Naive thymus-derived CD4-positive, alpha-beta T cell (primary cell): ENCODE measurements at regions of chr16 and their contacts with region 1.

Region 1: GRCh38 chr16:66977341-66978113 is 10.9 kb upstream of the CES4A start:
- DNase-seq: peak; percentile 69 to 92 (median 82)
- ATAC-seq: peak; percentile 99
- H3K4me3 ChIP-seq: no peak overlapping the region
- H3K4me3 Mint-ChIP-seq: peak overlapping the region in 1 of 10 donors; percentile 12
- H3K27ac ChIP-seq: no peak overlapping the region
- H3K27ac Mint-ChIP-seq: peak overlapping the region in 2 of 9 donors; percentile 42 to 86
- H3K4me1 ChIP-seq: no peaks in the 10 kb centered on the region
- H3K4me1 Mint-ChIP-seq: peaks cover 4 to 69% (median 11%) of the 10 kb centered on the region in 7 donors
- H3K27me3 ChIP-seq: no peaks in the 10 kb centered on the region
- H3K27me3 Mint-ChIP-seq: peaks cover 0 to 3% (median 0%) of the 10 kb centered on the region in 5 donors

Region 2: GRCh38 chr16:66650707-66651473 is 326.6 kb before region 1 on chr16:
- CTCF ChIA-PET with region 1: no interaction called
- POLR2A ChIA-PET with region 1: no interaction called
- intact Hi-C with region 1: no loop called
- DNase-seq: peak; percentile 57 to 87 (median 81)
- ATAC-seq: peak; percentile 99
- H3K4me3 ChIP-seq: peak overlapping the region; percentile 44
- H3K4me3 Mint-ChIP-seq: peak overlapping the region; percentile 50 to 86 (median 76)
- H3K27ac ChIP-seq: no peak overlapping the region
- H3K27ac Mint-ChIP-seq: peak overlapping the region in 6 of 9 donors; percentile 41 to 71 (median 62)
- H3K4me1 ChIP-seq: peaks cover 0 to 5% of the 10 kb centered on the region in 2 donors
- H3K4me1 Mint-ChIP-seq: peaks cover 0 to 15% (median 9%) of the 10 kb centered on the region in 7 donors
- H3K27me3 ChIP-seq: no peaks in the 10 kb centered on the region
- H3K27me3 Mint-ChIP-seq: peaks cover 2 to 11% (median 6%) of the 10 kb centered on the region in 5 donors

Region 3: GRCh38 chr16:66954097-66954659 is 23.3 kb before region 1 on chr16:
- CTCF ChIA-PET with region 1: no interaction called
- POLR2A ChIA-PET with region 1: no interaction called
- intact Hi-C with region 1: loop called in 1 of 2 experiments (anchors 2 kb)
- DNase-seq: peak; percentile 46 to 78 (median 67)
- ATAC-seq: peak; percentile 86
- H3K4me3 ChIP-seq: no peak overlapping the region
- H3K4me3 Mint-ChIP-seq: peak overlapping the region in 1 of 10 donors; percentile 5
- H3K27ac ChIP-seq: no peak overlapping the region
- H3K27ac Mint-ChIP-seq: peak overlapping the region in 1 of 9 donors; percentile 4
- H3K4me1 ChIP-seq: no peaks in the 10 kb centered on the region
- H3K4me1 Mint-ChIP-seq: peaks cover 11 to 27% (median 15%) of the 10 kb centered on the region in 7 donors
- H3K27me3 ChIP-seq: no peaks in the 10 kb centered on the region
- H3K27me3 Mint-ChIP-seq: peaks cover 31 to 40% (median 35%) of the 10 kb centered on the region in 5 donors

Region 4: DNA sequence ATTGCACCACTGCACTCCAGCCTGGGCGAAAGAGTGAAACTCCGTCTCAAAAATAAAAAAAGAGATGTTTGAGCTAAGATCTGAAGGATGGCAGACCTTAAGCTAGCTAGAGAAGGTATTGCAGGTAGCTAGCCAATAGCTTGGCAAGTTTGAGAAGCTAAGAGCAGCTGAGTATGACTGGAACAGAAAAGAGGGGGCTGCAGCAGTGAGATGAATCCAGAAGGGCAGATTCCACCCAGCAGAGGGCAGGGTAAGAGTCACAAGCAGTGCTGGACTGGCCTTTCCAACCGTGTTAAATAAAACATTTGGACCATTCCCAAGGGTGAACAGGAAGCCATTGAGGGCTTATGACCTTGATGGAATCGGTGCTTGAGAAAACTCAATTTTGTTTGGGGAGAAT is 126.5 kb after region 1 on chr16:
- CTCF ChIA-PET with region 1: interaction called, 4 read pairs
- POLR2A ChIA-PET with region 1: no interaction called
- intact Hi-C with region 1: loop called (anchors 1 kb)
- DNase-seq: no peak
- ATAC-seq: no peak
- H3K4me3 ChIP-seq: no peak overlapping the region
- H3K4me3 Mint-ChIP-seq: no peak overlapping the region
- H3K27ac ChIP-seq: no peak overlapping the region
- H3K27ac Mint-ChIP-seq: peak overlapping the region in 4 of 9 donors; percentile 18 to 79 (median 44)
- H3K4me1 ChIP-seq: peaks cover 2 to 3% of the 10 kb centered on the region in 2 donors
- H3K4me1 Mint-ChIP-seq: peaks cover 0 to 8% (median 0%) of the 10 kb centered on the region in 7 donors
- H3K27me3 ChIP-seq: no peaks in the 10 kb centered on the region
- H3K27me3 Mint-ChIP-seq: no peaks in the 10 kb centered on the region

Region 5: DNA sequence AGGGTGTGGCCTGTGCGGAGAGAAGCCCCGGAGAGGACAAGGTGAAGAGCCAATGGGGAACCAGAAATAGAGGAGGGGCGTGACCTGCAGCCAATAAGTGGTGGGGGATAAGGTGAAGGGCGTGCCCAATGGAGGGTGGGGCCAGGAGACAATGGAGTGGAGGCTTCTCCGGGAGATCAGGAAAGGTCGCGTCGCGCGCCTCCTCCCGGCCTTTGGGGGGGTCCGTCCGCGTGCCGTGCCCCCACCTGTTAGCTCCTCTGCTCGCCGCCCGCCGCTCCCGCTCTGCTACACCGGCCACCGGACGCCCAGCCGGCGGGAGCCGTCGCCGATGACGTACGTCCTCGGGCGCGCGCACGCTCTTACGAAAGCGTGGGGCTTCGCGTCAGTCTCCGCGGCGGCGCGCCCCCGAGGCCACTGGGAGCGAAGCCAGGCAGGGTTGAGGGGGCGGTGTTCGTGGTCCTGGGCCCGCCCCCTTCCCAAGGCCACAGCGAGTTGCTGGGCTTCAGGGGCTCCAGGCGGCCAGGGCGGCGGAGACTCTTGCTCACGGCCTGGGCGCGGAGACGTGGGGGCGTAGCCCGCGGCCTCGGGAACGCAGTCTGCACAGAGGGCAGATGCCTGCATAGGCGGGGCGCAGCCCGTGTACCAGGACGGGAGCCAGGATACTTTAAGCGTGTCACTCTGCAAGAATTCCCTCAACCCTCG is 206.3 kb after region 1 on chr16 and contains the start of gene MATCAP1:
- CTCF ChIA-PET with region 1: interaction called, 6 read pairs
- POLR2A ChIA-PET with region 1: interaction called, 3 read pairs
- intact Hi-C with region 1: loop called (anchors 1 kb)
- DNase-seq: peak; percentile 90 to 98 (median 96)
- ATAC-seq: peak; percentile 97
- H3K4me3 ChIP-seq: peak within 1 kb of the TSS; percentile 79
- H3K4me3 Mint-ChIP-seq: peak within 1 kb of the TSS in 5 of 10 donors; percentile 48 to 91 (median 86)
- H3K27ac ChIP-seq: peak within 1 kb of the TSS; percentile 97
- H3K27ac Mint-ChIP-seq: peak within 1 kb of the TSS in 2 of 9 donors; percentile 58 to 67
- H3K4me1 ChIP-seq: peaks cover 12 to 15% of the 10 kb centered on the region in 2 donors
- H3K4me1 Mint-ChIP-seq: peaks cover 8 to 24% (median 13%) of the 10 kb centered on the region in 7 donors
- H3K27me3 ChIP-seq: no peaks in the 10 kb centered on the region
- H3K27me3 Mint-ChIP-seq: peaks cover 4 to 15% (median 4%) of the 10 kb centered on the region in 5 donors
- total RNA-seq, gene MATCAP1: 4.3 to 88.1 (median 11.0) TPM

Region 6: GRCh38 chr16:67415872-67416793 is 438.6 kb after region 1 on chr16 and contains the start of gene ZDHHC1:
- CTCF ChIA-PET with region 1: no interaction called
- POLR2A ChIA-PET with region 1: no interaction called
- intact Hi-C with region 1: loop called in 1 of 2 experiments (anchors 1 kb)
- DNase-seq: peak in 5 of 9 donors; percentile 19 to 76 (median 45)
- ATAC-seq: peak; percentile 90
- H3K4me3 ChIP-seq: peak within 1 kb of the TSS; percentile 30
- H3K4me3 Mint-ChIP-seq: peak within 1 kb of the TSS; percentile 67 to 88 (median 76)
- H3K27ac ChIP-seq: no peak within 1 kb of the TSS
- H3K27ac Mint-ChIP-seq: peak within 1 kb of the TSS in 3 of 9 donors; percentile 11 to 82 (median 63)
- H3K4me1 ChIP-seq: no peaks in the 10 kb centered on the region
- H3K4me1 Mint-ChIP-seq: peaks cover 5 to 15% (median 10%) of the 10 kb centered on the region in 7 donors
- H3K27me3 ChIP-seq: peaks cover 3 to 4% of the 10 kb centered on the region in 2 donors
- H3K27me3 Mint-ChIP-seq: peaks cover 22 to 42% (median 34%) of the 10 kb centered on the region in 5 donors
- total RNA-seq, gene ZDHHC1: 0.34 to 3.6 (median 0.48) TPM in 3 of 5 experiments, not detected in the others